Colonic mucosa (tissue), 4 donors: ENCODE measurements at regions of chr16 and their contacts with region 1.

Region 1: GRCh38 chr16:25106567-25107465 is 4.7 kb upstream of the LCMT1 start:
- DNase-seq: peak; percentile 95
- H3K4me3 ChIP-seq: peak overlapping the region; percentile 70
- H3K27ac ChIP-seq: peak overlapping the region; percentile 39
- H3K4me1 ChIP-seq: peaks cover 18% of the 10 kb centered on the region
- H3K27me3 ChIP-seq: no peaks in the 10 kb centered on the region
- CTCF ChIP-seq: no peak

Region 2: DNA sequence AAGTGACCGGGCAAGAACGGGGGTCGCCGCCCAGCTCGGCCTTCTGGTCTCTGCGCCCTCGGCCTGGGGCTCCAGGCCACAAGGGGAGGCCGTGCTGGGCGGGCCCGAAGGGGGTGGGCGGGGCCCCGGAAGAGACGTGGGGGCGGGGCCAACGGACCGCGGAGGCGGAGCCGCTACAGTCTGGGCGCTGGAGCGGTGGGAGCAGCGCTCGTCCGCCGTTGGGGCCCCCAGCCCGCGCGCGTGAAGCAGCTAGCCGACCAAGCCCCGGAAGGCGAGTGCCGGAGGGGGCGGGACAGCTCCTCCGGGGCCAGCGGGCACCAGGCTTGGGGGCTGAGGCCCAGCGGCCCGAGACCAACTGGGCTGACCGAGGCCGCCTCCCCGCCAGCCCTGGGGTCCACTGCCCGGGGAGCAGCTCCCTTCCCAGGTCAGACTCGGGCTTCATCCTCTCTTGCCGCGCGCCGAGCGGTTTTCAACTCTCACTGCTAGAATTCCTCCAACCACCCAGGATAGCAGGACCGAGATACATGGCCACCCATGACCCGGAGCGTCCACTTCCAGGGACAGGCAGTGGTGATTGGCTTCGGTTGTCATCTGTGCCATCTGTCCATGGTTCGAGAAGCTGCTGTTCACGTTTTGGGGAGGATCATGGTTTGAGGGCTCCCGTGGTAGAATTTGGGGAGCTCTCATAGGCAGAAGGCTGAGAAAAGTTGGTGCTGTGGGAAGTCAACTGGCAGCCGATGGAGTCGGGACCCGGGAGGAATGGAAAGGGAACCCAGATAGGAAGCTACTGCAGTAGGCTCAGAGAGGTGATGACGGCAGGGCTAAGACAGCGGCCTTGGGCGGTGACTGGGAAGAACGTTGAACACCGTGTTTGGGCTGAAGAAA is 39.8 kb before region 1 on chr16:
- intact Hi-C with region 1: loop called (anchors 5 kb)
- DNase-seq: peak; percentile 87
- H3K4me3 ChIP-seq: peak overlapping the region; percentile 68
- H3K27ac ChIP-seq: peak overlapping the region; percentile 64
- H3K4me1 ChIP-seq: no peaks in the 10 kb centered on the region
- H3K27me3 ChIP-seq: no peaks in the 10 kb centered on the region
- CTCF ChIP-seq: no peak